Activated CD8-positive, alpha-beta T cell treated with anti-CD3 and anti-CD28 coated beads, Interleukin-2, amount 10 ng/mL, durations not matched to agents 7 days and 5 days (primary cell): ENCODE measurements at regions of chrX and their contacts with region 1.

Region 1: GRCh38 chrX:48911412-48912182 is at the start of gene SLC35A2:
- DNase-seq: peak; percentile 91
- ATAC-seq: peak; percentile 73
- H3K4me3 Mint-ChIP-seq: peak within 1 kb of the TSS; percentile 89
- H3K27ac Mint-ChIP-seq: peak within 1 kb of the TSS; percentile 94
- H3K4me1 Mint-ChIP-seq: peaks cover 51% of the 10 kb centered on the region
- H3K27me3 Mint-ChIP-seq: no peaks in the 10 kb centered on the region
- total RNA-seq, gene SLC35A2: 14.8 to 15.3 TPM

Region 2: GRCh38 chrX:48945516-48946348 is 34.1 kb after region 1 on chrX:
- CTCF ChIA-PET with region 1: interaction called, 10 read pairs
- POLR2A ChIA-PET with region 1: interaction called, 93 read pairs
- DNase-seq: peak; percentile 61
- ATAC-seq: peak; percentile 58
- H3K4me3 Mint-ChIP-seq: no peak overlapping the region
- H3K27ac Mint-ChIP-seq: peak overlapping the region; percentile 55
- H3K4me1 Mint-ChIP-seq: peaks cover 56% of the 10 kb centered on the region
- H3K27me3 Mint-ChIP-seq: no peaks in the 10 kb centered on the region

Region 3: DNA sequence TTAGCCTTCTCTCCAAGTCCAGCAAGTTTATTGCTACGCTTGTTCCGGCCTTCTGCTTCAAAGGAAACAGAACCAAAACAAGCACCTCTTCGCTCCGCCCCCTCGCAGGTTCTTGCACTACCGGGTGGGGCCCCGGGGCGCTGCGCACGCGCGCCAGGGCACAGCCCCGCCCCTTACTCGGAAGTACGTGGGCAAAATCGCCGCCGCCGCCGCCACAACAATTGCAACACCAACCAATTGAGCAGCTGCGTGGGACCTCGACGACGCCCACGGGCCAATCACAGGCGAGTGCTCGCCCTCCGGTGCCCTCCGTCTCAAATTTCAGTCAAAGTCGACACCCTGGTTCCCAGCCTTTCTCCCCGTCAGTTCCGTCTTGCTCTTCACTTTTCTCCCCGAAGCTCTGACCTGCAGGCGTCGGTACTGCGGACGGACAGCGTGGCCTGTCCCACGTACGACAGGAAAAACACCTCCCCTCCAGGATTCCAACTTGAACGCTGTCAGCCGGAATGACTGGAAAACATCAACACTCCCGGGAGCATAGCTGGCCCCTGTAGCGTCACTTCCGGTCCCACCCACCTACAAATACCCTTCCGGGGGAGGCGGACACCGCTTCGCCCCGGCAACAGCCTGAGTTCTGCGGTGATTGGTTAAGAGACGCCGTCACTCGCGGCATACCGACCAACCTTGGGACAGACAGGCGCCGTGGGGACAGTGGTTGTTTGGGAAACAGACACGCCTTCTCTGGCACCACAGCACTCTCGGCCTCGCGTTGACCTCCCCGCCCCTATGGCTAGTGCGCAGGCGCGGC is 46.4 kb after region 1 on chrX:
- CTCF ChIA-PET with region 1: no interaction called
- POLR2A ChIA-PET with region 1: interaction called, 21 read pairs
- DNase-seq: peak; percentile 95
- ATAC-seq: peak; percentile 88
- H3K4me3 Mint-ChIP-seq: peak overlapping the region; percentile 99
- H3K27ac Mint-ChIP-seq: peak overlapping the region; percentile 100
- H3K4me1 Mint-ChIP-seq: peaks cover 35% of the 10 kb centered on the region
- H3K27me3 Mint-ChIP-seq: no peaks in the 10 kb centered on the region